ENCODE measurements at regions of chr5 and their contacts with region 1.

Region 1: GRCh38 chr5:141326088-141326854 is 4.0 kb upstream of the PCDHGA1 start:
- DNase-seq: no peak
- H3K4me3 ChIP-seq: peak overlapping the region; percentile 64
- CTCF ChIP-seq: peak; percentile 70

Region 2: DNA sequence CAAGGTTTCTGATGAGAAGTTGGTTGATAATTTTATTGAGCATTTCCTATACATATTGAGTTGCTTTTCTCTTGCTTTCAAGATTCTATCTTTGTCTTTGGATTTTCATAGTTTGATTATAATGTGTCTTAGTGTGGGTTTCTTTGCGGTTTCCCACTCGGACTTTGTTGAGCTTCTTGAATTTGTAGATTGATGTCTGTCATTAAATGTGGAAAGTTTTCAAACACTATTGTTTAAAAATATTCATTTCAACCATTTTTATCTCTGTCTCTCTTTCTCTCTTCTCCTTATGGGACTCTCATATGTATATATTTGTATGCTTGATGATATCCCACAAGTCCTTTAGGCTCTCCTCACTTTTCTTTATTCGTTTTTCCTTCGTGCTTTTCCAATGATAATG is 558.8 kb before region 1 on chr5:
- CTCF ChIA-PET with region 1: no interaction called
- POLR2A ChIA-PET with region 1: no interaction called
- DNase-seq: no peak
- H3K4me3 ChIP-seq: no peak overlapping the region
- CTCF ChIP-seq: no peak

Region 3: GRCh38 chr5:141127305-141127704 is 199.0 kb before region 1 on chr5:
- CTCF ChIA-PET with region 1: no interaction called
- POLR2A ChIA-PET with region 1: no interaction called
- DNase-seq: no peak
- H3K4me3 ChIP-seq: no peak overlapping the region
- CTCF ChIP-seq: no peak

Region 4: GRCh38 chr5:141349917-141350619 is 23.8 kb after region 1 on chr5 and contains the start of gene PCDHGB1:
- CTCF ChIA-PET with region 1: interaction called, 24 read pairs
- POLR2A ChIA-PET with region 1: no interaction called
- DNase-seq: no peak
- H3K4me3 ChIP-seq: peak within 1 kb of the TSS; percentile 39
- CTCF ChIP-seq: peak; percentile 50

Region 5: DNA sequence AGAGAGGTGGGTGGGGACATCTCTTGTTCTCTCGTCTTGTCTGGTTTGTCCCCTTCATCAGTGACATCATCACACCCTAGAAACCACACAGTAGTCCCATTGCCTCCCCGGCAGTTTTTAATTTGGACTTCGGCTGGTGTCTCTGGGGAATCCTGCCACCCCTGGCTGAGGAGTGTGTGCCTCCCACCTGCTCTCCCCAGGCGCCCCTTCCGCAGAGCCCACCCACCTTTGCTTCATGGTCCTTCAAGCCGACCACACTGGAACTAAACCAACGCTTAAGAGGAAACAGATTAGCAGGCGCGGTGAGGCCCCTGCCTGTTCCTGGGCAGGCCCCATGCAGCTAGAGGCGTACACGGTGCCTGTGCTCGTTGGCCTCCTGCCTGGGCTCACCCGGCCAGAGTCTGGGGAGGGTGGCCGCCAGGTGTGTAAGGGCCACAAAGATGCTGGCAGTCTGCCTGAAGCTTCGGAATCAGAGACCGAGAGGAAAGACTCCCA is 1106.1 kb after region 1 on chr5:
- CTCF ChIA-PET with region 1: no interaction called
- POLR2A ChIA-PET with region 1: no interaction called
- DNase-seq: no peak
- H3K4me3 ChIP-seq: no peak overlapping the region
- CTCF ChIP-seq: no peak